Astrocyte of the cerebellum (primary cell): ENCODE measurements at regions of chr6 and their contacts with region 1.

Region 1: GRCh38 chr6:150256618-150257272 is 112.1 kb upstream of the IYD start:
- DNase-seq: no peak
- H3K4me3 ChIP-seq: no peak overlapping the region
- CTCF ChIP-seq: no peak

Region 2: GRCh38 chr6:150208611-150209352 is 48.0 kb before region 1 on chr6:
- in situ Hi-C with region 1: loop called (anchors 5 kb)
- DNase-seq: peak; percentile 26
- H3K4me3 ChIP-seq: no peak overlapping the region
- CTCF ChIP-seq: no peak

Region 3: DNA sequence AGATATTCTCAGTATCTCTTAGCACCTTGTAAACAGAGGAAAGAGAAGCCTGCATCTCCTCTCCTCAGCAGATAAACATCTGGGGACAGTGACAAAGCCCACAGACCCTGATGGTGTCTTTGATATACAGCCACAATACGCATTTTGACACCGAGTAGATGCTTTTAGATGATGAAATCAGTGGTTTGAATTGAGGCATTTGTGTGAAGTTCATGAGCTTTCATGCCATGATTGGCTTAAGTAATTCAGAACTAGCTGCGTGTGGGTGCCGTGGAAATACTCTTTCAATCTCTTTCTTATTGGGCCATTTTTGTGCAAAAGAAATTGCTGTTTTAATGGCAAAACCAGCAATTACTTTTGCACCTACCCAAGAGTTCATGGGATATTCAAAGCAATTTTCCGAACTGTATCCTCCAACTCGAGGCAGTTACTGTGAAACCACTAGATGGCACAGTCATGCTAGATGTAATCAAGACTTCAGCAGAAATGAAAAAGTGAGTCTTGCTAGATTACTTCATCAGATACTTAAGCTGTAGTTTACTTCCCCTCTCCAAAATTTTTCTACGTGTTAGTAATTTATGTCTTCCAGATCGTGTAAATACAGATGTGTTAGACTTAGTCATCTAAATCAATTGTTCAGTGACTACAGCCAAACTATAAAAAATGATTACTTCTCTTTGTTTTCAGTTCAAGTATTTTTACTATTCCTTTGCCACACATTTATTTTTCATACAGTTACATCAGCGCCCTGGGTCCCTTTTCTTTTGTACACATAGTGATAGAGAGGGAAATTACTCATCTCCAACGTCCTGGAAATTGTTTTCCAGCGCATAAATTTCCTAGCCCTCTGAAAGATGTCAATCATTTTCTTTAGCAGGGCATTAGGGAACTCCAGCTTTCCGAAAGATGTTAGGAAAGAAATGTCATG is 161.4 kb after region 1 on chr6:
- in situ Hi-C with region 1: no loop called
- DNase-seq: peak; percentile 81
- H3K4me3 ChIP-seq: peak overlapping the region; percentile 21
- CTCF ChIP-seq: peak; percentile 82